ENCODE measurements at regions of chr11 and their contacts with region 1.

Region 1: GRCh38 chr11:8566613-8567210 is 27.3 kb downstream of the STK33 start:
- DNase-seq: no peak
- ATAC-seq: no peak
- H3K4me3 ChIP-seq: no peak overlapping the region
- H3K27ac ChIP-seq: no peak overlapping the region
- H3K4me1 ChIP-seq: no peaks in the 10 kb centered on the region
- H3K27me3 ChIP-seq: no peaks in the 10 kb centered on the region

Region 2: DNA sequence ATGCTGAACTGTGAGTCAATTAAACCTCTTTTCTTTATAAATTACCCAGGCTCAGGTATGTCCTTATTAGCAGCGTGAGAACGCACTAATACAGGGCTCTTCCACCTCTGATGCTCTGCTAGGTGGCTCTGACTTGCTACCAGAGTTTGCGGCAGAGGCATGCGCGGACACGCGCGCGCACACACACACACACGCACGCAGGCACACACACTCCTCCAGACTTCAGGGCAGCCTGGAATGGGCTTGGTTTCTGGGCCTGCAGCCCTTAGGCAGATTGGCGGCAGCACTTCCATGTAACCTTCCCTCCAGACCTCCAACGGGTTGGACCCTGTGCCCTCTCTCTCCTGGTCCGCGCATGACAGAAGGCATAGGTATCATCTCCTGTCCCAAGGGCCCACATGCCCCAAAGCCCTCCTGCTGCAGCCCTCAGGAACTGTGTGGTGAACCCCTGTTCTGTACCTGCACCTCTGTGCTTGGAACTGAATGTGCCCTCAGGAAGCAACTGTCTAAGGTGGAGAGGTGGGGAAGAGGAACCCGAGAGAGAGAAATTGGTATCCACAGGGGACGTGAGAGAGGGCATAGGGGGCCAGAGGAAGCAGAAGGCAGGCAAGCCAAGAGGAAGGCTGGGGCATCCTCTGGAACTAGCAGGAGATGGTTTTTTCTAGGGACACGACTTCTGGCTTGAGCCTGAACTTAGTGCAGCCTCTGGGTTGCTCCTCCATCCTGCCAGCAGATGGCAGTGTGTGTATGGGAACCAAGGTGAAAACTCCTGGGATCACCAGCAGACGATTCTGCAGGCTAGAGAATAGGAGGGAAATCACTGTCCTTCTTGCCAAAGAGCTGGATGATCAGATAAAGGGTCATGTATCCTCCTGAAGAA is 374.5 kb before region 1 on chr11:
- intact Hi-C with region 1: loop called in 1 of 2 experiments (anchors 10 kb)
- DNase-seq: peak in 1 of 2 donors; percentile 70
- ATAC-seq: peak; percentile 76
- H3K4me3 ChIP-seq: no peak overlapping the region
- H3K27ac ChIP-seq: no peak overlapping the region
- H3K4me1 ChIP-seq: no peaks in the 10 kb centered on the region
- H3K27me3 ChIP-seq: no peaks in the 10 kb centered on the region

Region 3: GRCh38 chr11:8219257-8220021 is 347.3 kb before region 1 on chr11:
- intact Hi-C with region 1: loop called in 1 of 2 experiments (anchors 5 kb)
- DNase-seq: no peak
- ATAC-seq: no peak
- H3K4me3 ChIP-seq: no peak overlapping the region
- H3K27ac ChIP-seq: no peak overlapping the region
- H3K4me1 ChIP-seq: no peaks in the 10 kb centered on the region
- H3K27me3 ChIP-seq: no peaks in the 10 kb centered on the region

Region 4: DNA sequence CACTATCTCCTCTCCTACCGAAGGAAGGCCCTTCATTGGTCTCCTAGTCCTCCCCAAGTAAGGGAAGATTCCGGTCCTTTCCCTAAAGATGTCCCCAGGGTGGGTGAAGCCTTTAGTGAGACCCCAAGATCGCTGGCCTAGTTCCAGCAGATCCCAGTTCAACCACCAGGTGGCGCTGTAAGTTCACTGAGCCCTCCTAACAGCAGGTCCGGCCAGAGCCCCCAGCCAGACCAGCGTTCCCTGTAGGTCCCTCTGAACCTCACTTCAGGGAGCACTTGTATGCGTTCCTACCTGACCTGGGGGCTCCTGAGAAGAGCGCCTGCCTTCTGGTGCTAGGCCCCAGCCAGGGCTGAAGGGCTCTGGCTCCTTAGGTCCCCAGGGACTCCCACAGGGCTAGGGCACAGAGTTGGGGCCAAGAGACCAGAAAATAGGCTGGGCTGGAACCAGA is 341.1 kb before region 1 on chr11:
- intact Hi-C with region 1: loop called (anchors 1 to 5 kb)
- DNase-seq: peak; percentile 72 to 89
- ATAC-seq: peak; percentile 53
- H3K4me3 ChIP-seq: no peak overlapping the region
- H3K27ac ChIP-seq: no peak overlapping the region
- H3K4me1 ChIP-seq: no peaks in the 10 kb centered on the region
- H3K27me3 ChIP-seq: no peaks in the 10 kb centered on the region

Region 5: GRCh38 chr11:8813658-8814057 is 246.9 kb after region 1 on chr11:
- intact Hi-C with region 1: loop called in 1 of 2 experiments (anchors 10 kb)
- DNase-seq: peak; percentile 84 to 91
- ATAC-seq: peak; percentile 78
- H3K4me3 ChIP-seq: no peak overlapping the region
- H3K27ac ChIP-seq: no peak overlapping the region
- H3K4me1 ChIP-seq: no peaks in the 10 kb centered on the region
- H3K27me3 ChIP-seq: no peaks in the 10 kb centered on the region